Calu3 (cell line): ENCODE measurements at regions of chr5 and their contacts with region 1.

Region 1: DNA sequence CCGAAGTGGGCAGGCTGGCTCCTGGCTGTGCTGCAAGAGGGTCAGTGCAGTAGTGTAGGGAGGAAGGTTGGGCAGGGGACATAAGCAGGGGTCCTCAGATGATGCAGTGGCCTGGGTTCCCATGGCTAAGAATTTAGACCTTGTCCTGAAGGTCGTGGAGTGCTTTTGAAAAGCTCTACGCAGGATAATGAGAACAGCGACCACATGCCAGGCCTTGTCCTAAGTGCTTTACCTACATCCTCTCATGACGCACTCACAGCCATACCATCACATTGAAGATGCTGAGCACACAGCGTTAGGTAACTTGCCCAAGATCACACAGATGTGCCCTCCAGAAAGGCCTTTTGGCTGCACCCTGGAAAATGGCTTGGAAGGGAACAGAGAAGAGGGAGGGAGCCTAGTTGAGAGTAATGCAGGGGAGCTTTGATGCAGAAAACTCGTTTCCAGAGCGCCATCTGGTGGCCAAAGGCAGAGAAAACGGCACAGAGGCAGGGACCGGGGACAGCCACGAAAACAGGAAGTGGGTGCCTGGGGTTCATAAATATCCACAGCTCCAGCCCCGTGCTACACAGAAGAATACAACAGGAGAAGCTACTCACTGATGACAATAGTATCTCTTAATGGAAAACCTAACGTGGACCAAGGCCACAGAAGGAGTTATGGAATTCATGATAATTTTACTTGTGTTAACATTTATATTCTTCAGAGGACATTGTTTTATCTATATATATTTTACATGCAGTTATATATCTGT is 2.6 kb upstream of the PCDH12 start:
- DNase-seq: peak; percentile 91
- H3K4me3 Mint-ChIP-seq: no peak overlapping the region
- H3K27ac Mint-ChIP-seq: no peak overlapping the region
- H3K4me1 Mint-ChIP-seq: no peaks in the 10 kb centered on the region
- H3K27me3 Mint-ChIP-seq: peaks cover 14% of the 10 kb centered on the region
- CTCF ChIP-seq: peak; percentile 86

Region 2: GRCh38 chr5:141664732-141665461 is 295.7 kb before region 1 on chr5:
- CTCF ChIA-PET with region 1: interaction called, 12 read pairs
- intact Hi-C with region 1: loop called (anchors 1 kb)
- DNase-seq: peak; percentile 88
- H3K4me3 Mint-ChIP-seq: no peak overlapping the region
- H3K27ac Mint-ChIP-seq: no peak overlapping the region
- H3K4me1 Mint-ChIP-seq: no peaks in the 10 kb centered on the region
- H3K27me3 Mint-ChIP-seq: no peaks in the 10 kb centered on the region
- CTCF ChIP-seq: peak; percentile 95

Region 3: GRCh38 chr5:141691867-141692532 is 268.6 kb before region 1 on chr5:
- CTCF ChIA-PET with region 1: interaction called, 95 read pairs
- intact Hi-C with region 1: loop called (anchors 1 kb)
- DNase-seq: peak; percentile 95
- H3K4me3 Mint-ChIP-seq: peak overlapping the region; percentile 69
- H3K27ac Mint-ChIP-seq: no peak overlapping the region
- H3K4me1 Mint-ChIP-seq: peaks cover 35% of the 10 kb centered on the region
- H3K27me3 Mint-ChIP-seq: peaks cover 47% of the 10 kb centered on the region
- CTCF ChIP-seq: peak; percentile 97

Region 4: GRCh38 chr5:141849375-141850243 is 111.0 kb before region 1 on chr5:
- CTCF ChIA-PET with region 1: interaction called, 10 read pairs
- intact Hi-C with region 1: no loop called
- DNase-seq: peak; percentile 99
- H3K4me3 Mint-ChIP-seq: peak overlapping the region; percentile 48
- H3K27ac Mint-ChIP-seq: peak overlapping the region; percentile 93
- H3K4me1 Mint-ChIP-seq: peaks cover 53% of the 10 kb centered on the region
- H3K27me3 Mint-ChIP-seq: no peaks in the 10 kb centered on the region
- CTCF ChIP-seq: no peak

Region 5: GRCh38 chr5:141889282-141889871 is 71.2 kb before region 1 on chr5:
- CTCF ChIA-PET with region 1: interaction called, 21 read pairs
- intact Hi-C with region 1: loop called (anchors 1 kb)
- DNase-seq: no peak
- H3K4me3 Mint-ChIP-seq: no peak overlapping the region
- H3K27ac Mint-ChIP-seq: no peak overlapping the region
- H3K4me1 Mint-ChIP-seq: no peaks in the 10 kb centered on the region
- H3K27me3 Mint-ChIP-seq: peaks cover 24% of the 10 kb centered on the region
- CTCF ChIP-seq: no peak